Left colon (tissue), 2 donors: ENCODE measurements at regions of chr22 and their contacts with region 1.

Region 1: GRCh38 chr22:27804470-27805297 is 3.1 kb upstream of the MN1 start:
- DNase-seq: peak in 1 of 2 donors; percentile 61
- ATAC-seq: peak; percentile 73

Region 2: DNA sequence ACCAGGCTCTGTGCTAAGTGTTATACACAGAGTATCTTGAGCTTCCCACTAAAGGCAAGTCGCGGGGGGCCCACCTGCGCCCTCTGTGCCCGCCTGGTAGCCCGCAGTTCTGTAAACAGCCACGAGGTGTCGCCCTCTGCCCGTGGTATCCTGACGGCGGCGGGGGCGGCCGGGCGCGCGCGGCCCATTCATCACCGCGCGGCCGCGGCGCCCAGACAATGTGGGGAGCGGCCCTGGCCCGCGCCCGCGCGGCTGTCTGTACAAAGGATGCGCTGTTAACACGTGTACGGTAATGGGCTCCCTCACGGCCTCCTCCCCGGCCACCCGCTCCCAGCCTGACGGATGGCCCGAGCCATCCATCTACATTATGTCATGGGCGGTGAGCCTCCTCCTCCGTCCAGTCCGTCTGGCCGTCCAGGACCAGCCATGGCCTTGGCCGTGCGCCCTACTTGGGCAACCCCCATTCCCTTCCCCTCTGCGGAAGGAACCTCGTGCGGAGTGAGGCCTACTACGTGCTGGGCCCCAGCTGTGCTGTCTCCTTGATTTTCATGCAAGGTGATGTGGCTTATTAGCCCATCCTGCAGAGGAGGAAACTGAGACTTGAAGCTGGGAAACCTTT is 1047.9 kb before region 1 on chr22:
- intact Hi-C with region 1: loop called in 1 of 2 experiments (anchors 5 kb)
- DNase-seq: peak; percentile 36 to 70
- ATAC-seq: peak; percentile 90

Region 3: DNA sequence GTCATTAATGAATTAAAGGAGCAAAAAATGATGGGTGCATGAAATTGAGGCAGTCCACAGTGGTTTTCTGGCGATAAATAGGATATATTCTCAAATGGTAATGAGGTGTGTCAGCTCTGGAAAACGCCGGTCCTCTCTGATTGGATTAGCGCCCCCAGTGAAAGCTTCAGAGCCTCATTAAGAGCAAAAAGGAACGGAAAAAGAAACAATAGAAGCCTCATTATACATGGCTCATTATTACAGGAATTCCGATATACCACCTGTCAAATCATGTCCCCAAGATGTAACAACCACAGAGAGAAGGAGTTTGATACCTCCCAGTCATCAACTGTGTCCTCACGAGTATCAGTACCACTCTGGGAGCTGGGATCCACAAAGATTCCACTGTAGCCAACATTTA is 290.1 kb after region 1 on chr22:
- intact Hi-C with region 1: no loop called
- DNase-seq: no peak
- ATAC-seq: no peak